AG04449 (cell line): ENCODE measurements at regions of chr6 and their contacts with region 1.

Region 1: GRCh38 chr6:12605888-12606345 is 110.7 kb upstream of the PHACTR1 start:
- DNase-seq: no peak
- H3K4me3 ChIP-seq: no peak overlapping the region
- CTCF ChIP-seq: peak; percentile 65

Region 2: GRCh38 chr6:11585426-11586016 is 1020.4 kb before region 1 on chr6:
- CTCF ChIA-PET with region 1: interaction called, 14 read pairs
- POLR2A ChIA-PET with region 1: no interaction called
- DNase-seq: no peak
- H3K4me3 ChIP-seq: no peak overlapping the region
- CTCF ChIP-seq: peak; percentile 50

Region 3: DNA sequence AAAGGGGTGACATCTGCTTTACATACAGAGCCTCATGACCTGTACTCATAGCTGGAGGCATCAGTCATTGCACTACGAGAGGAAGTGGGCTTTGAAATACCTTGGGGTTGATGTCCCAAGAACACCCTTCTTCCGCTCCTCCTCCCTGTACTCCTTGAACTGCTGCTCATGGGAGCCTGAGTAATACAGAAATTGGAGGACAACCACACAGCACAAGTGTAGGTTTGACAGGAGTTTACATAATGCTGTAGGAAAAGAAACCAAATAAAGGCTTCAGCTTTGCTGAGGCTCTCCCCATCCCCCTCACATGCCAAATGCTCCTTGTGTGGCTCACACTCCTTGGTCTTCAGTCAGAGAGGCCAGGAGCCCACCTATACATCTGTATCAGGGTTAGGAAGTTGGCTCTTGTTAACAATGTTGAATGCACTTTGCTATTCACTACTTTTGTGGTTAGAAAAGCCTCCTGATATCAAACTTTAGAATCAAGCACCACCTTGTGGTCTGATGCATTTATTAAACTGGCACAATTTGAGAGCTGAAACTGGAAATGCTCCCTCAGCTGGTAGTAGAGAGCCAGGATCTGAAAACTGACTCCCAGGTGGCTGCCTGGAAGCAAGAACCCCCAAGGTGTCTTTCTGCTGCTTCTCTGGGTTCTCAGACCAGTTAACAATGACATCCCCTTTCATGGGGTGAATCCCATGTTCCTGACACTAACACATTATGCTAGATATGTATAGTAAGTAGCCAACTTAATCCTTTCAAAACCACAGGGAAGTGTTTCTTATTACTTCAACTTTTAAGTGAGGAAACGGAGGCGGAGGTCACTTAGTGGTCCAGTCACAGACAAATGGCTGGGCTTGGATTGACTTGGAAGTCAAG is 372.0 kb before region 1 on chr6:
- CTCF ChIA-PET with region 1: interaction called, 10 read pairs
- POLR2A ChIA-PET with region 1: no interaction called
- DNase-seq: peak; percentile 46
- H3K4me3 ChIP-seq: no peak overlapping the region
- CTCF ChIP-seq: peak; percentile 60

Region 4: GRCh38 chr6:12296255-12296573 is 309.7 kb before region 1 on chr6:
- CTCF ChIA-PET with region 1: interaction called, 281 read pairs
- POLR2A ChIA-PET with region 1: no interaction called
- DNase-seq: peak; percentile 84
- H3K4me3 ChIP-seq: peak overlapping the region; percentile 15
- CTCF ChIP-seq: no peak

Region 5: GRCh38 chr6:12383448-12383847 is 222.5 kb before region 1 on chr6:
- CTCF ChIA-PET with region 1: interaction called, 11 read pairs
- POLR2A ChIA-PET with region 1: no interaction called
- DNase-seq: no peak
- H3K4me3 ChIP-seq: no peak overlapping the region
- CTCF ChIP-seq: no peak

Region 6: GRCh38 chr6:12403201-12403826 is 202.6 kb before region 1 on chr6:
- CTCF ChIA-PET with region 1: interaction called, 41 read pairs
- POLR2A ChIA-PET with region 1: no interaction called
- DNase-seq: no peak
- H3K4me3 ChIP-seq: no peak overlapping the region
- CTCF ChIP-seq: no peak

Region 7: DNA sequence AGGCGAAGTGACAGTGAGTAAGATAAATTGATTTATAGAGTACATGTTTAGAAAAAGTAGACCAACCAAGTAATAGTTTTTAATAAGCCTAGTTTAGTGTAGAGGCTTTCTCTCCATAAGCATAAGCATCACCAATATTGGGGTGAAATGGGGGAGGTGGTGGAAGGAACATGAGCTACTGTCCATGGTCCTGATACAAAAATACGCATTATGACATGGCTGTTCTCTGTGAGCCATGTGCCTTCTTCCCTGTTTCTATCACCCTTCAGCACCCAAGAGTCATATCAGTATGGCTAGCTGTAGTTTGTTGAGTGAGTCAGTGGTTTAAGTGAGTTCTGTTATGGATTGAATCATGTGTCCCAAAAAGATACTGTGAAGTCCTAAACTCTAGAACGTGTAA is 164.9 kb before region 1 on chr6:
- CTCF ChIA-PET with region 1: interaction called, 10 read pairs
- POLR2A ChIA-PET with region 1: no interaction called
- DNase-seq: no peak
- H3K4me3 ChIP-seq: no peak overlapping the region
- CTCF ChIP-seq: no peak

Region 8: GRCh38 chr6:12653486-12653885 is 47.6 kb after region 1 on chr6:
- CTCF ChIA-PET with region 1: no interaction called
- POLR2A ChIA-PET with region 1: no interaction called
- DNase-seq: no peak
- H3K4me3 ChIP-seq: no peak overlapping the region
- CTCF ChIP-seq: no peak